Activated CD4-positive, alpha-beta T cell treated with anti-CD3 and anti-CD28 coated beads, Interleukin-2, amount 10 ng/mL, durations not matched to agents 24 days and 14 days (primary cell): ENCODE measurements at regions of chr1 and their contacts with region 1.

Region 1: GRCh38 chr1:10236405-10237156 is 26.2 kb downstream of the KIF1B start:
- DNase-seq: no peak
- H3K4me3 Mint-ChIP-seq: no peak overlapping the region
- H3K27ac Mint-ChIP-seq: peak overlapping the region; percentile 67
- H3K4me1 Mint-ChIP-seq: peaks cover 10% of the 10 kb centered on the region
- H3K27me3 Mint-ChIP-seq: no peaks in the 10 kb centered on the region

Region 2: DNA sequence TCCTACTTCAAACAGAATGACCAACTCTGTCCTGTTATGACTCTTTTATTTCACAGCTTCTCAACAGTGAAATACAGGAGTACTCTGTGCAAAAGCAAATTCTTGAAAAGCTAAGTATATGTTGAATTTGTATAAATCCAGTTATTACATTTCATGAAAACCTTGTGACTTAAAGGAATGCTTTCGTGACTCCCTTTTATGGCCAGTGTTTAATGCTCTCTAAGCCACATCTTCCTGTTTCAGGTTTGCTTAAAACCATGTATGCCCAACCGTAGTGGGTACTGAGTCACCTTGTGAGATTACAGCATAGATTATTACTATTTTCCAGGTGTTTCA is 66.4 kb before region 1 on chr1:
- intact Hi-C with region 1: no loop called
- DNase-seq: peak; percentile 77
- H3K4me3 Mint-ChIP-seq: peak overlapping the region; percentile 67
- H3K27ac Mint-ChIP-seq: peak overlapping the region; percentile 85
- H3K4me1 Mint-ChIP-seq: peaks cover 45% of the 10 kb centered on the region
- H3K27me3 Mint-ChIP-seq: no peaks in the 10 kb centered on the region

Region 3: GRCh38 chr1:10204003-10204642 is 32.5 kb before region 1 on chr1:
- intact Hi-C with region 1: no loop called
- DNase-seq: no peak
- H3K4me3 Mint-ChIP-seq: no peak overlapping the region
- H3K27ac Mint-ChIP-seq: no peak overlapping the region
- H3K4me1 Mint-ChIP-seq: peaks cover under 1% of the 10 kb centered on the region
- H3K27me3 Mint-ChIP-seq: peaks cover 9% of the 10 kb centered on the region

Region 4: DNA sequence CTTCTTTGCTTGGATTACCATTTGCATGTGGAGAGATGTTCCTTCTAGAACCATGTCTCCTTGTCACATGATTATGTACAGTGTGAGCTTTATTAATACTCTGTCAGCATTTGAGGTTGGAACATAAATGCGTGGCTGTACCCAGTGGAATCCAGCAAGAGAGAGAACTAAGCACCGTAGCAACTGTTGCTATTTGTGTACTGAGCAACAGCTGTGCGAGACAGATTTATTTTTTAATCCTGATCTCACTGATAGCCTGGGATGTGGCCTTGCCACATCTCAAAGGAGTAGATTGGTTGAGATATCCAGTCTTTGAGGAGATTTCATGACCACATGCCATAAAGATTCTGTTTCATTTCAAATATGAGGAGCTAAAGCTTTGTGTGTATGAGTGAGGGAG is 17.2 kb after region 1 on chr1:
- intact Hi-C with region 1: no loop called
- DNase-seq: no peak
- H3K4me3 Mint-ChIP-seq: no peak overlapping the region
- H3K27ac Mint-ChIP-seq: no peak overlapping the region
- H3K4me1 Mint-ChIP-seq: peaks cover 6% of the 10 kb centered on the region
- H3K27me3 Mint-ChIP-seq: no peaks in the 10 kb centered on the region

Region 5: GRCh38 chr1:10283318-10283984 is 46.9 kb after region 1 on chr1:
- intact Hi-C with region 1: loop called (anchors 2 kb)
- DNase-seq: peak; percentile 72
- H3K4me3 Mint-ChIP-seq: no peak overlapping the region
- H3K27ac Mint-ChIP-seq: peak overlapping the region; percentile 17
- H3K4me1 Mint-ChIP-seq: peaks cover 20% of the 10 kb centered on the region
- H3K27me3 Mint-ChIP-seq: no peaks in the 10 kb centered on the region